ENCODE measurements at regions of chr17 and their contacts with region 1.

Region 1: GRCh38 chr17:40091691-40092397 is 8.5 kb downstream of the NR1D1 start:
- DNase-seq: no peak
- H3K4me3 ChIP-seq: no peak overlapping the region
- H3K27ac ChIP-seq: peak overlapping the region; percentile 88 to 99 (median 94)
- H3K4me1 ChIP-seq: peaks cover 69 to 83% (median 81%) of the 10 kb centered on the region in 4 donors
- H3K27me3 ChIP-seq: no peaks in the 10 kb centered on the region
- CTCF ChIP-seq: no peak
- EP300 ChIP-seq: no peak
- POLR2A ChIP-seq: no peak

Region 2: GRCh38 chr17:39988206-39988810 is 103.5 kb before region 1 on chr17:
- intact Hi-C with region 1: no loop called
- DNase-seq: no peak
- H3K4me3 ChIP-seq: no peak overlapping the region
- H3K27ac ChIP-seq: no peak overlapping the region
- H3K4me1 ChIP-seq: peaks cover under 1 to 8% (median 3%) of the 10 kb centered on the region in 4 donors
- H3K27me3 ChIP-seq: no peaks in the 10 kb centered on the region
- CTCF ChIP-seq: no peak
- EP300 ChIP-seq: no peak
- POLR2A ChIP-seq: no peak

Region 3: DNA sequence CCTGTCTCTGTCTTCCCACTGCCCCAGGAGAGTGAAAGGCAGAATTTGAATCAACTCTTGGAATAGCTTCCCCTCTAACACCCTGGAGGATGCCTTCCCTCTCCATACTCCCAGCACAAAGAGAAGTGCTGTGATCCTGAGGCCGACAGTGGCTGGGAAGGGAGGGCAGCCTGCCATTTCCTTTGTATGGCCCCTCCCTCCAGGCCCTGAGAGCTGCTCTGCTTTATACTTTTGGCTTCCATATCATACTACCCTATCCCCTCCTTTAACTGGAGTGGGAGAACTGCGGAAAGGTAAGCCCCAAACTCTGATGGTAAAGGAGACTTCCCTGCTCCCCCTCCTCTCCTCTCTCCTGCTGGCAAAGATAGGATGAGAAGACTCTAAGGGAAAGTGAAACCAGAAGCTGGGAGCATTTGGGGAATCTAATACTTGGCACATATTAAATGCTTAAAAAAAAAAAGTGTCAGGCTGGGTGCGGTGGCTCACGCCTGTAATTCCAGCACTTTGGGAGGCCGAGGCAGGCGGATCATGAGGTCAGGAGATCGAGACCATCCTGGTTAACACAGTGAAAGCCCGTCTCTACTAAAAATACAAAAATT is 33.6 kb before region 1 on chr17:
- intact Hi-C with region 1: loop called (anchors 5 kb)
- DNase-seq: no peak
- H3K4me3 ChIP-seq: peak overlapping the region in 1 of 4 donors; percentile 19
- H3K27ac ChIP-seq: peak overlapping the region; percentile 67 to 99 (median 86)
- H3K4me1 ChIP-seq: peaks cover 30 to 61% (median 47%) of the 10 kb centered on the region in 4 donors
- H3K27me3 ChIP-seq: no peaks in the 10 kb centered on the region
- CTCF ChIP-seq: no peak
- EP300 ChIP-seq: no peak
- POLR2A ChIP-seq: no peak

Region 4: GRCh38 chr17:40122999-40123810 is 31.4 kb after region 1 on chr17:
- intact Hi-C with region 1: no loop called
- DNase-seq: no peak
- H3K4me3 ChIP-seq: peak overlapping the region; percentile 80 to 100 (median 97)
- H3K27ac ChIP-seq: peak overlapping the region; percentile 97 to 99 (median 98)
- H3K4me1 ChIP-seq: peaks cover 19 to 50% (median 42%) of the 10 kb centered on the region in 4 donors
- H3K27me3 ChIP-seq: no peaks in the 10 kb centered on the region
- CTCF ChIP-seq: no peak
- EP300 ChIP-seq: no peak
- POLR2A ChIP-seq: peak; percentile 8